Calu3 (cell line): ENCODE measurements at regions of chr4 and their contacts with region 1.

Region 1: GRCh38 chr4:97003715-97004114 is 1139.6 kb downstream of the STPG2 start:
- DNase-seq: no peak
- H3K4me3 Mint-ChIP-seq: peak overlapping the region; percentile 33
- H3K27ac Mint-ChIP-seq: no peak overlapping the region
- H3K4me1 Mint-ChIP-seq: peaks cover 11% of the 10 kb centered on the region
- H3K27me3 Mint-ChIP-seq: no peaks in the 10 kb centered on the region
- CTCF ChIP-seq: no peak

Region 2: DNA sequence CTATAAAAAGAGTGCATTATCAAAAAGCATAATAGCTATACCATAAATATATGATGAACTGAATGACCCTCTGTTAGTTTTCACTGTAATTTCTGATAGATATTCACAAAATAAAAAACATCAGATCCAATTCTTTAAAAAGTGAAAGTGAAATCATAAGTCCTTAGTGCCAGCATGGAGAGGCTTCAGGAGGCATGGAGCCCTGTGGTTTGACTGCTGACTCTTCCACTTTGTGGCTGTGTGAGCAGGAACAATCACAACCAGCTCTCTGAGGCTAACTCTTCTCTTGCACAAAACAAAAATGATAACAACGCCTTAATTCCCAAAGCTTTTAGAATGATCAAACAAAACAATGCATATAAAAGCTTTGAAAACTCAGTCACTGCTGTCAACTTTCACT is 19.9 kb before region 1 on chr4:
- CTCF ChIA-PET with region 1: interaction called, 10 read pairs
- intact Hi-C with region 1: no loop called
- DNase-seq: no peak
- H3K4me3 Mint-ChIP-seq: no peak overlapping the region
- H3K27ac Mint-ChIP-seq: no peak overlapping the region
- H3K4me1 Mint-ChIP-seq: no peaks in the 10 kb centered on the region
- H3K27me3 Mint-ChIP-seq: no peaks in the 10 kb centered on the region
- CTCF ChIP-seq: no peak

Region 3: DNA sequence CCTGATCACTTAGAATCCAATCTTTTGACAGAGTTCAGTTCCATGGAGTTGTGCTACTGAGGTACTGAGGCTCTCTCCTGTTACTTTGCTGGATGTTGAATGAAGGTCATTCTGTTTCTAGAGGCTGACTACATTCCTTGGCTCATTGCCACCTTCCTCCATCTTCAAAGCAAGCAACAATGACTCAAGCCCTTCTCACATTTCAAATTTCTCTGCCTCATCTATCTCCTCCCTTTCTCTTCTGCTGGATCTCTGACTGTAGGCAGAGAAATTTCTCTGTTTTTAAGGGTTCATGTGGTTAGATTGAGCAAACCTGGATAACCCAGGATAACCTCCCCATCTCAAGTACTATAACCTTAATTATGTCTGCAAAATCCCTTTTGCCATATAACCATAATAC is 364.2 kb after region 1 on chr4:
- CTCF ChIA-PET with region 1: no interaction called
- intact Hi-C with region 1: no loop called
- DNase-seq: peak; percentile 39
- H3K4me3 Mint-ChIP-seq: no peak overlapping the region
- H3K27ac Mint-ChIP-seq: peak overlapping the region; percentile 40
- H3K4me1 Mint-ChIP-seq: peaks cover 9% of the 10 kb centered on the region
- H3K27me3 Mint-ChIP-seq: no peaks in the 10 kb centered on the region
- CTCF ChIP-seq: no peak